ENCODE measurements at regions of chr3 and their contacts with region 1.

Region 1: GRCh38 chr3:66253790-66254620 is 33.2 kb downstream of the SLC25A26 start:
- DNase-seq: no peak
- ATAC-seq: no peak
- H3K4me3 ChIP-seq: no peak overlapping the region
- H3K27ac ChIP-seq: no peak overlapping the region
- H3K4me1 ChIP-seq: peaks cover 0 to 4% (median 0%) of the 10 kb centered on the region in 12 donors
- H3K27me3 ChIP-seq: no peaks in the 10 kb centered on the region
- CTCF ChIP-seq: peak; percentile 61 to 90 (median 78)
- POLR2A ChIP-seq: no peak

Region 2: GRCh38 chr3:66224220-66224619 is 29.8 kb before region 1 on chr3:
- intact Hi-C with region 1: no loop called
- DNase-seq: no peak
- ATAC-seq: no peak
- H3K4me3 ChIP-seq: no peak overlapping the region
- H3K27ac ChIP-seq: no peak overlapping the region
- H3K4me1 ChIP-seq: peaks cover 0 to 21% (median 9%) of the 10 kb centered on the region in 12 donors
- H3K27me3 ChIP-seq: no peaks in the 10 kb centered on the region
- CTCF ChIP-seq: no peak
- POLR2A ChIP-seq: no peak

Region 3: GRCh38 chr3:66822186-66823008 is 568.4 kb after region 1 on chr3:
- intact Hi-C with region 1: loop called in 9 of 10 experiments (anchors 2 to 5 kb)
- DNase-seq: peak in 4 of 5 donors; percentile 28 to 50 (median 36)
- ATAC-seq: peak in 3 of 4 donors; percentile 74 to 87 (median 83)
- H3K4me3 ChIP-seq: no peak overlapping the region
- H3K27ac ChIP-seq: no peak overlapping the region
- H3K4me1 ChIP-seq: peaks cover 0 to 2% (median 0%) of the 10 kb centered on the region in 12 donors
- H3K27me3 ChIP-seq: no peaks in the 10 kb centered on the region
- CTCF ChIP-seq: peak; percentile 55 to 82 (median 72)
- POLR2A ChIP-seq: no peak

Measured in heart left ventricle (tissue), 16 donors.